ENCODE measurements at regions of chr9 and their contacts with region 1.

Region 1: GRCh38 chr9:22316645-22317044 is 130.0 kb upstream of the DMRTA1 start:
- ATAC-seq: no peak
- H3K4me3 ChIP-seq: no peak overlapping the region
- H3K27ac ChIP-seq: no peak overlapping the region
- H3K4me1 ChIP-seq: no peaks in the 10 kb centered on the region

Region 2: GRCh38 chr9:21995177-21996086 is 321.2 kb before region 1 on chr9:
- in situ Hi-C with region 1: no loop called
- ATAC-seq: peak; percentile 59 to 82 (median 70)
- H3K4me3 ChIP-seq: peak overlapping the region; percentile 40 to 72 (median 61)
- H3K27ac ChIP-seq: peak overlapping the region in 1 of 2 donors; percentile 18
- H3K4me1 ChIP-seq: peaks cover 0 to 8% of the 10 kb centered on the region in 2 donors

Region 3: DNA sequence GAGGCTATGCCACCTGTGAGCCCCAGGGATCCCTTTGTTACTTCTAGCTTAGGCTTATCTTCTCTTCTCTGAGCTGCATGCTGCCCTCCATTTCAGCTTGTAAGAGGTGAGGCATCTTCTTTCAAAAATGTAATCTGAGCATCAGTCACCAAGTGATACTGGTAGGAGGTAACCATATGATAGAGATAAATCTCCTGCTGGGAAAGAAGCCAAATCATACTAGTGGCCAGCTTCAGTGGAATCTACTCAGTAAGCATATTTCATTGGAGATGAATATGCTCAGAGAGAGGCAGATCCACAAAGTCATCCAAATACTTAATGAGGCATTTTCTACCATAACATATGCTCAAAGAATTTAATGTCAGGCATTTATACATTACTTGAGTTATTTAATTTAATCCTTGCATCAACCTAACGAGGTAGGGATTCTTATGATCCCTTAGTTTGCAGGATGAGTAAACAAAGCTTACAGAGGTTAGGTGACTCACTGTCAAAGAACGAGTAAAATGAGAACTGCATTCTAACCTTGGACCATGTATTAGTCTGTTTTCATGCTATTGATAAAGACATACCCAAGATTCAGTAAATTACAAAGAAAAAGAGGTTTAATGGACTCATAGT is 79.0 kb after region 1 on chr9:
- in situ Hi-C with region 1: no loop called
- ATAC-seq: no peak
- H3K4me3 ChIP-seq: no peak overlapping the region
- H3K27ac ChIP-seq: no peak overlapping the region
- H3K4me1 ChIP-seq: no peaks in the 10 kb centered on the region

Region 4: GRCh38 chr9:22446950-22447617 is 130.4 kb after region 1 on chr9:
- in situ Hi-C with region 1: loop called in 3 of 9 experiments (anchors 10 to 25 kb)
- ATAC-seq: peak; percentile 82 to 94 (median 90)
- H3K4me3 ChIP-seq: peak overlapping the region; percentile 59 to 73 (median 63)
- H3K27ac ChIP-seq: peak overlapping the region in 1 of 2 donors; percentile 63
- H3K4me1 ChIP-seq: peaks cover 2 to 4% of the 10 kb centered on the region in 2 donors

Measured in motor neuron (in vitro differentiated cells).